ENCODE measurements at regions of chr16 and their contacts with region 1.

Region 1: GRCh38 chr16:85554112-85554813 is 58.9 kb upstream of the GSE1 start:
- DNase-seq: peak in 8 of 9 donors; percentile 28 to 78 (median 52)
- ATAC-seq: peak; percentile 76
- H3K4me3 ChIP-seq: peak overlapping the region; percentile 88
- H3K4me3 Mint-ChIP-seq: peak overlapping the region; percentile 86 to 98 (median 92)
- H3K27ac ChIP-seq: peak overlapping the region; percentile 83
- H3K27ac Mint-ChIP-seq: peak overlapping the region; percentile 72 to 97 (median 89)
- H3K4me1 ChIP-seq: peaks cover 13 to 27% of the 10 kb centered on the region in 2 donors
- H3K4me1 Mint-ChIP-seq: peaks cover 18 to 47% (median 28%) of the 10 kb centered on the region in 7 donors
- H3K27me3 ChIP-seq: no peaks in the 10 kb centered on the region
- H3K27me3 Mint-ChIP-seq: peaks cover 0 to 15% (median 0%) of the 10 kb centered on the region in 5 donors

Region 2: DNA sequence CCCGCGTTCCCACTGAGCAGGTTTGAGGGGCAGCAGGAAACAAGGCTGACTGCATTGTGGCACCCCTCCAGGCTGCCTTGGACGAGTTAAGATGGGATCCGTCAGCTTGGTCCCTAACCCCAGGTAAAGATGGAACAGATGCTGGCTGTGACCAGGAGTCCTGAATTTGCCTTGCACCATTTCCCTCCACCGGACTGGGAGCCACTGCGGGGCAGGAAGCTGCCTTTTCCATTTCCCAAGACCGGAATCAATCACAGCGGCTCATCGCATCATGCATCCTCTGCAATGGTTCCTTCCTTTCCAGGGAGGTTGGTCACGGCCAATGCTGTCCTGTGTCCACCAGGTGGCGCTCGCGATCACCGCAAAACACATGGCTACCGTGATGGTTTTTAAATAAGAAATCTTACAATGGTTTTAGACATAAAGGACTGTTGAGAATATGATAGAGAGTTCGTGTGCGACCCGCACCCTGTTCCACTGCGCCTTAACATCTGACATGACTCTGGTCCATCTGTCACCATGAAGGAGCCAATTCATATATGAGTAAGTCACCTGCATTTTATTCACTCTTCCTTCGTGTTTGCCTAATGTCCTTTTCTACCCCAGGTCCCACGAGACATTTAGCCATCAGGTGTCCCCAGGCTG is 1043.0 kb before region 1 on chr16:
- CTCF ChIA-PET with region 1: no interaction called
- POLR2A ChIA-PET with region 1: no interaction called
- intact Hi-C with region 1: loop called in 1 of 2 experiments (anchors 10 kb)
- DNase-seq: peak; percentile 55 to 88 (median 79)
- ATAC-seq: peak; percentile 62
- H3K4me3 ChIP-seq: no peak overlapping the region
- H3K4me3 Mint-ChIP-seq: peak overlapping the region in 9 of 10 donors; percentile 11 to 71 (median 62)
- H3K27ac ChIP-seq: no peak overlapping the region
- H3K27ac Mint-ChIP-seq: peak overlapping the region; percentile 55 to 94 (median 82)
- H3K4me1 ChIP-seq: peaks cover 53 to 77% of the 10 kb centered on the region in 2 donors
- H3K4me1 Mint-ChIP-seq: peaks cover 48 to 79% (median 74%) of the 10 kb centered on the region in 7 donors
- H3K27me3 ChIP-seq: no peaks in the 10 kb centered on the region
- H3K27me3 Mint-ChIP-seq: no peaks in the 10 kb centered on the region

Region 3: GRCh38 chr16:85104821-85105391 is 449.4 kb before region 1 on chr16:
- CTCF ChIA-PET with region 1: no interaction called
- POLR2A ChIA-PET with region 1: no interaction called
- intact Hi-C with region 1: no loop called
- DNase-seq: peak in 6 of 9 donors; percentile 16 to 54 (median 46)
- ATAC-seq: peak; percentile 87
- H3K4me3 ChIP-seq: no peak overlapping the region
- H3K4me3 Mint-ChIP-seq: peak overlapping the region; percentile 16 to 80 (median 72)
- H3K27ac ChIP-seq: peak overlapping the region; percentile 49
- H3K27ac Mint-ChIP-seq: peak overlapping the region; percentile 54 to 96 (median 90)
- H3K4me1 ChIP-seq: peaks cover 26 to 40% of the 10 kb centered on the region in 2 donors
- H3K4me1 Mint-ChIP-seq: peaks cover 16 to 50% (median 47%) of the 10 kb centered on the region in 7 donors
- H3K27me3 ChIP-seq: no peaks in the 10 kb centered on the region
- H3K27me3 Mint-ChIP-seq: no peaks in the 10 kb centered on the region

Region 4: GRCh38 chr16:85420501-85421337 is 133.5 kb before region 1 on chr16:
- CTCF ChIA-PET with region 1: interaction called, 4 read pairs
- POLR2A ChIA-PET with region 1: no interaction called
- intact Hi-C with region 1: loop called (anchors 2 kb)
- DNase-seq: peak; percentile 29 to 90 (median 71)
- ATAC-seq: peak; percentile 95
- H3K4me3 ChIP-seq: no peak overlapping the region
- H3K4me3 Mint-ChIP-seq: no peak overlapping the region
- H3K27ac ChIP-seq: no peak overlapping the region
- H3K27ac Mint-ChIP-seq: no peak overlapping the region
- H3K4me1 ChIP-seq: peaks cover 0 to 10% of the 10 kb centered on the region in 2 donors
- H3K4me1 Mint-ChIP-seq: peaks cover 0 to 10% (median 0%) of the 10 kb centered on the region in 7 donors
- H3K27me3 ChIP-seq: no peaks in the 10 kb centered on the region
- H3K27me3 Mint-ChIP-seq: peaks cover 0 to 4% (median 0%) of the 10 kb centered on the region in 5 donors

Region 5: GRCh38 chr16:85569615-85570212 is 15.5 kb after region 1 on chr16:
- CTCF ChIA-PET with region 1: no interaction called
- POLR2A ChIA-PET with region 1: interaction called, 5 read pairs
- intact Hi-C with region 1: loop called in 1 of 2 experiments (anchors 2 kb)
- DNase-seq: no peak
- ATAC-seq: peak; percentile 42
- H3K4me3 ChIP-seq: peak overlapping the region; percentile 29
- H3K4me3 Mint-ChIP-seq: peak overlapping the region in 9 of 10 donors; percentile 34 to 67 (median 40)
- H3K27ac ChIP-seq: no peak overlapping the region
- H3K27ac Mint-ChIP-seq: peak overlapping the region in 6 of 9 donors; percentile 29 to 81 (median 49)
- H3K4me1 ChIP-seq: peaks cover 18 to 51% of the 10 kb centered on the region in 2 donors
- H3K4me1 Mint-ChIP-seq: peaks cover 36 to 59% (median 49%) of the 10 kb centered on the region in 7 donors
- H3K27me3 ChIP-seq: no peaks in the 10 kb centered on the region
- H3K27me3 Mint-ChIP-seq: no peaks in the 10 kb centered on the region

Region 6: GRCh38 chr16:85634747-85635544 is 80.7 kb after region 1 on chr16:
- CTCF ChIA-PET with region 1: no interaction called
- POLR2A ChIA-PET with region 1: no interaction called
- intact Hi-C with region 1: no loop called
- DNase-seq: no peak
- ATAC-seq: no peak
- H3K4me3 ChIP-seq: no peak overlapping the region
- H3K4me3 Mint-ChIP-seq: no peak overlapping the region
- H3K27ac ChIP-seq: no peak overlapping the region
- H3K27ac Mint-ChIP-seq: no peak overlapping the region
- H3K4me1 ChIP-seq: no peaks in the 10 kb centered on the region
- H3K4me1 Mint-ChIP-seq: peaks cover 0 to 4% (median 0%) of the 10 kb centered on the region in 7 donors
- H3K27me3 ChIP-seq: no peaks in the 10 kb centered on the region
- H3K27me3 Mint-ChIP-seq: no peaks in the 10 kb centered on the region

Region 7: DNA sequence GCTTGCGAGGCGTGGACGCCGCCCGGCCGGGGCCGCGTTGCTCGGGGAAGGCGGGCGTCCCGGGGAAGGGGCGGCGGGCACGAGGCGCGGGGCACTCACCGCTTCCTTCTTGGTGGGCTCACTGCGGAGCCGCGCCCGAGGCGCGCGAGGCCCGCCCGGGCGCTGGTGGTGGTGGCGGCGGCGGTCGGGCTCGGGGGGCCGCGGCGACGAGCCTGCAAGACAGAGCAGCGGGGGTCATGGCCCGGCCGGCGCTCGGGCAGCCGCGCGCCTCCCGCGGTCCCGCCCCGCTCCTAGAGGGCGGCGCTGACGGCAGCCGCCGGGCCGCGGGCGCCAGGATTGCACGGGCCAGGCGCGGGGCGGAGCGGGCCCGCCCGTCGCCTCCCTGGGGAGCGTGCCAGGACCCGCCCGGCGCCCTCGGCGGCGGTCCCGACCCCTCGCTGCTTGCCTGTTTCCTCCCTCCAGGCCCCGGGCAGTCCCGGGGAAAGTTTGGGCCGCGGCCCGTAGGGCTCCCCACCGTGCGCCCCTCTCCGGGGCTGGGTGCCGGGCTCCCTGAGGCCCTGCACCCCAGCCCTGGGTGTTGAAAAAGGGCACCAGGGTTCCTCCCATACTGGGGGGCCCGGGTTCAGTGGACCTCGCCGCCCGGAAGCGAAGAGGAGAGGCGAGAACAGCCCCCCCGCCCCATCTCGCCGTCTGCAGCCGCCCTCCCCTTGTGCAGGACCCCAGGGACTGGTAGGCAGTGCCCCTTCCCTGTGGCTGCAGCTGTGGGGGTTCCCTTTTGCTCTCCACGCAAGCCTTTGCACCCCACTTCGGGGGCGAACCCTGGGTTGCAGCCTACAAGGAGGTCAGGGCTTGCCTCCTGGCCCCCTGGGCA is 196.8 kb after region 1 on chr16 and contains the start of gene C16orf74:
- CTCF ChIA-PET with region 1: no interaction called
- POLR2A ChIA-PET with region 1: no interaction called
- intact Hi-C with region 1: no loop called
- DNase-seq: peak in 2 of 9 donors; percentile 8 to 38
- ATAC-seq: peak; percentile 81
- H3K4me3 ChIP-seq: peak within 1 kb of the TSS; percentile 27
- H3K4me3 Mint-ChIP-seq: peak within 1 kb of the TSS; percentile 70 to 88 (median 83)
- H3K27ac ChIP-seq: no peak within 1 kb of the TSS
- H3K27ac Mint-ChIP-seq: peak within 1 kb of the TSS in 1 of 9 donors; percentile 72
- H3K4me1 ChIP-seq: peaks cover 0 to 8% of the 10 kb centered on the region in 2 donors
- H3K4me1 Mint-ChIP-seq: peaks cover 4 to 11% (median 5%) of the 10 kb centered on the region in 7 donors
- H3K27me3 ChIP-seq: no peaks in the 10 kb centered on the region
- H3K27me3 Mint-ChIP-seq: peaks cover 0 to 37% (median 16%) of the 10 kb centered on the region in 5 donors
- total RNA-seq, gene C16orf74: 0.99 to 19.8 (median 11.7) TPM

Region 8: DNA sequence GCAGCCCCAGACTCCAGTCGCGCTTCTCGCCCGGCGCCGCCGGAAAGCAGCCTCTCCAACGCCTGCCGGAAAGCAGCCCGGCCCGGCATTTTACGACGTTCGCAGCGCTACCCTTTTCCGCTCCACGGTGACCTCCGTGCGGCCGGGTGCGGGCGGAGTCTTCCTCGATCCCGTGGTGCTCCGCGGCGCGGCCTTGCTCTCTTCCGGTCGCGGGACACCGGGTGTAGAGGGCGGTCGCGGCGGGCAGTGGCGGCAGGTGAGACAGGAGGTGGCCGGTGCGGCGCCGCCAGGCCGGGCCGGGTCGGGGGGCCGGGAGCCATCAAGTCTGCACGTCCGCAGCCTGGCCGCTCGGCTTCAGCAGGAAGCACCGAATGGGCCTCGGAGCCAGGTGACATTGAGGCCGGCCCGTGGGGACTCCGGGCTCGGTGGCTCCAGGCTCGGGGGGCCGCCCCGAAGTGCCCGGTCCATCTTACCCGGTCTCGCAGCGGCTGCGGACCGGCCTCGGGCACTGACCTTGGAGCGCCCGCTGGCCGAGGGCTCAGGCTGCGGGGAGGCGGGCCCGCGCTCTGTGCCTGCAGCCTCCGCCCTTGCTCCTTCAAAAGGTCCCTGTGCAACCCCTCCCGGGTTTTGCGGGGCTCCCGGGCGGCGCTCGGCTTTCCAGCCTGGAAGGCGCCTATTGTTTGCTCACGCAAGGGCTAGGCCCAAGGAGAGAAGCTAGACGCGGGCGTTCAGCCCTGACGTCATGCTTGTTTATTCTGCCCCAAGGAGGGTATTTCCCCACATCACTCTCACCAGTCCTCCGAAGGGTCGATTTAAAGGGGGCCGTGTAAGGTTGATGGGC is 245.5 kb after region 1 on chr16 and contains the starts of genes COX4I1 and EMC8:
- CTCF ChIA-PET with region 1: no interaction called
- POLR2A ChIA-PET with region 1: no interaction called
- intact Hi-C with region 1: loop called (anchors 1 to 5 kb)
- DNase-seq: peak; percentile 86 to 95 (median 90)
- ATAC-seq: peak; percentile 92
- H3K4me3 ChIP-seq: peak within 1 kb of the TSS; percentile 81
- H3K4me3 Mint-ChIP-seq: peak within 1 kb of the TSS; percentile 86 to 94 (median 90)
- H3K27ac ChIP-seq: peak within 1 kb of the TSS; percentile 99
- H3K27ac Mint-ChIP-seq: peak within 1 kb of the TSS; percentile 90 to 98 (median 95)
- H3K4me1 ChIP-seq: peaks cover 18 to 26% of the 10 kb centered on the region in 2 donors
- H3K4me1 Mint-ChIP-seq: peaks cover 37 to 77% (median 68%) of the 10 kb centered on the region in 7 donors
- H3K27me3 ChIP-seq: no peaks in the 10 kb centered on the region
- H3K27me3 Mint-ChIP-seq: no peaks in the 10 kb centered on the region
- total RNA-seq, gene COX4I1: 479 to 692 (median 661) TPM
- total RNA-seq, gene EMC8: 22.4 to 31.8 (median 28.7) TPM

Measured in naive thymus-derived CD4-positive, alpha-beta T cell (primary cell).